ENCODE measurements at regions of chr1 and their contacts with region 1.

Region 1: GRCh38 chr1:107142140-107142542 is 1.3 kb downstream of the NTNG1 start:
- DNase-seq: peak; percentile 82
- ATAC-seq: no peak; the same call in 1 of the 2 replicates
- H3K4me3 ChIP-seq: peak overlapping the region; percentile 80
- H3K27ac ChIP-seq: no peak overlapping the region
- H3K4me1 ChIP-seq: peaks cover 36% of the 10 kb centered on the region
- H3K27me3 ChIP-seq: no peaks in the 10 kb centered on the region
- CTCF ChIP-seq: peak; percentile 70

Region 2: DNA sequence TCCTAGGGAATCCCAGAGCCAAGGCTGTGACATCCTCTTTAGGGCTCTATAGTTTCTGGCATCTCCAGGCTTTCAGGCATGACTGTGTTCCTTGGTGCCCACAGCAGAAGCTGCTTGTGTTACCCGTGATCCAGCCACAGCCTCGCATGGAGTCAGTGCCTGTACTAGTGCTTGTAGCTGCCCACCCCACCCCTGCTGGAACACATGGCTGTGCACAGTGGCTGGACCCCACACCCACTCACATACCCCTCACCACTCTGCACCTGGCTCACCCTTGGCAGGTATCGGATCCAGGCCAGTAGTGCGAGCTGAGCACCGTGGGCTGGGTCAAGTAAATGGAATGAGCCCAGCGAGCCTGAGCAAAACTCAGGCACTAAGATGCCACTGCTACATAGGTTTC is 1020.4 kb before region 1 on chr1:
- CTCF ChIA-PET with region 1: no interaction called
- POLR2A ChIA-PET with region 1: no interaction called
- intact Hi-C with region 1: loop called (anchors 5 kb)
- DNase-seq: no peak
- ATAC-seq: no peak
- H3K4me3 ChIP-seq: no peak overlapping the region
- H3K27ac ChIP-seq: no peak overlapping the region
- H3K4me1 ChIP-seq: no peaks in the 10 kb centered on the region
- H3K27me3 ChIP-seq: no peaks in the 10 kb centered on the region
- CTCF ChIP-seq: no peak

Region 3: DNA sequence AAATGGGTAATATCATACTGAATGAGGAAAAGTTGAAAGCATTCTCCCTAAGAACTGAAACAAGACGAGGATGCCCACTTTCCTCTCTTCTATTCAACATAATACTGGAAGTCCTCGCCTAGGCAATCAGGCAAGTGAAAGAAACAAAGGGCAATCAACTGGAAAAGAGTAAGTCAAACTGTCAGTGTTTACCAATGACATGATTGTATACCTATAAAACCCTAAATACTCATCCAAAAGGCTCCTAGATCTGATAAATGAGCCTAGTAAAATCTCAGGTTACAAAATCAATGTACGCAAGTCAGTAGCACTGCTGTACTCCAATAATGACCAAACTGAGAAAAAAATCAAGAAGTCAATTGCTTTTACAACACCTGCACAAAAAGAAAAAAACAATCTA is 661.5 kb before region 1 on chr1:
- CTCF ChIA-PET with region 1: no interaction called
- POLR2A ChIA-PET with region 1: no interaction called
- intact Hi-C with region 1: loop called (anchors 10 kb)
- DNase-seq: peak; percentile 73
- ATAC-seq: peak; percentile 93
- H3K4me3 ChIP-seq: no peak overlapping the region
- H3K27ac ChIP-seq: no peak overlapping the region
- H3K4me1 ChIP-seq: peaks cover 8% of the 10 kb centered on the region; the same call in 1 of the 2 replicates
- H3K27me3 ChIP-seq: no peaks in the 10 kb centered on the region
- CTCF ChIP-seq: no peak

Region 4: GRCh38 chr1:106620521-106620954 is 521.6 kb before region 1 on chr1:
- CTCF ChIA-PET with region 1: no interaction called
- POLR2A ChIA-PET with region 1: no interaction called
- intact Hi-C with region 1: loop called (anchors 5 kb)
- DNase-seq: peak; percentile 97
- ATAC-seq: peak; percentile 99
- H3K4me3 ChIP-seq: no peak overlapping the region
- H3K27ac ChIP-seq: peak overlapping the region; percentile 97
- H3K4me1 ChIP-seq: peaks cover 40% of the 10 kb centered on the region
- H3K27me3 ChIP-seq: no peaks in the 10 kb centered on the region
- CTCF ChIP-seq: peak; percentile 50

Region 5: DNA sequence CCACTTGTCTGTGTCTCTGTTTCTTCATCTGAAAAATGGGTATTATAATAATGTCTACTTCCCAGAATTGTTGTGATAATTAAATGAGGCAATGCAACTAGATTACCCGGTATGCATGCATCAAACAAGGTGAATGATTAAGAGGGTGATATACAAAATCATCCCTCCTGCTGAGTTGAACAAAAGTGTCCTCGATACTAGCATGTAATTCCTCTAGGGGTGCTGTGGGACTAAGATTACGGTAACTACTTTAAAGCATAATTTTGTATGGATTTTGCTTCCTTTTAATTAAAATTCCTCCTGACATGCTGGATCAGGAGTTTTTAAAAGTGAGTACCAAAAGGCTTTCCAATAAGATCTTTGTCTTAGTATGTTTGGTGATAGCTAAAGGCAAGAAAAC is 184.4 kb before region 1 on chr1:
- CTCF ChIA-PET with region 1: no interaction called
- POLR2A ChIA-PET with region 1: no interaction called
- intact Hi-C with region 1: loop called (anchors 5 kb)
- DNase-seq: peak; percentile 24
- ATAC-seq: no peak
- H3K4me3 ChIP-seq: no peak overlapping the region
- H3K27ac ChIP-seq: no peak overlapping the region
- H3K4me1 ChIP-seq: 0 out of 2 replicates have a peak, but pooled peaks cover 7% of the 10 kb centered on the region
- H3K27me3 ChIP-seq: no peaks in the 10 kb centered on the region
- CTCF ChIP-seq: peak; percentile 56

Region 6: GRCh38 chr1:107076841-107077240 is 65.3 kb before region 1 on chr1:
- CTCF ChIA-PET with region 1: no interaction called
- POLR2A ChIA-PET with region 1: no interaction called
- intact Hi-C with region 1: loop called (anchors 2 kb)
- DNase-seq: peak; percentile 97
- ATAC-seq: peak; percentile 99
- H3K4me3 ChIP-seq: no peak overlapping the region
- H3K27ac ChIP-seq: peak overlapping the region; percentile 84
- H3K4me1 ChIP-seq: peaks cover 20% of the 10 kb centered on the region
- H3K27me3 ChIP-seq: no peaks in the 10 kb centered on the region
- CTCF ChIP-seq: no peak

Region 7: GRCh38 chr1:107100331-107100984 is 41.7 kb before region 1 on chr1:
- CTCF ChIA-PET with region 1: no interaction called
- POLR2A ChIA-PET with region 1: no interaction called
- intact Hi-C with region 1: no loop called
- DNase-seq: no peak
- ATAC-seq: no peak
- H3K4me3 ChIP-seq: no peak overlapping the region
- H3K27ac ChIP-seq: no peak overlapping the region
- H3K4me1 ChIP-seq: no peaks in the 10 kb centered on the region
- H3K27me3 ChIP-seq: no peaks in the 10 kb centered on the region
- CTCF ChIP-seq: no peak

Measured in PC-3 (cell line).